Naive thymus-derived CD4-positive, alpha-beta T cell (primary cell): ENCODE measurements at regions of chr7 and their contacts with region 1.

Region 1: GRCh38 chr7:128883622-128884501 is 21.2 kb downstream of the ATP6V1F start:
- DNase-seq: peak; percentile 61 to 88 (median 81)
- ATAC-seq: peak; percentile 82
- H3K4me3 ChIP-seq: peak overlapping the region; percentile 20
- H3K4me3 Mint-ChIP-seq: no peak overlapping the region
- H3K27ac ChIP-seq: no peak overlapping the region
- H3K27ac Mint-ChIP-seq: peak overlapping the region in 1 of 9 donors; percentile 81
- H3K4me1 ChIP-seq: no peaks in the 10 kb centered on the region
- H3K4me1 Mint-ChIP-seq: peaks cover 0 to 3% (median 0%) of the 10 kb centered on the region in 7 donors
- H3K27me3 ChIP-seq: peaks cover 0 to 3% of the 10 kb centered on the region in 2 donors
- H3K27me3 Mint-ChIP-seq: peaks cover 0 to 7% (median 0%) of the 10 kb centered on the region in 5 donors

Region 2: DNA sequence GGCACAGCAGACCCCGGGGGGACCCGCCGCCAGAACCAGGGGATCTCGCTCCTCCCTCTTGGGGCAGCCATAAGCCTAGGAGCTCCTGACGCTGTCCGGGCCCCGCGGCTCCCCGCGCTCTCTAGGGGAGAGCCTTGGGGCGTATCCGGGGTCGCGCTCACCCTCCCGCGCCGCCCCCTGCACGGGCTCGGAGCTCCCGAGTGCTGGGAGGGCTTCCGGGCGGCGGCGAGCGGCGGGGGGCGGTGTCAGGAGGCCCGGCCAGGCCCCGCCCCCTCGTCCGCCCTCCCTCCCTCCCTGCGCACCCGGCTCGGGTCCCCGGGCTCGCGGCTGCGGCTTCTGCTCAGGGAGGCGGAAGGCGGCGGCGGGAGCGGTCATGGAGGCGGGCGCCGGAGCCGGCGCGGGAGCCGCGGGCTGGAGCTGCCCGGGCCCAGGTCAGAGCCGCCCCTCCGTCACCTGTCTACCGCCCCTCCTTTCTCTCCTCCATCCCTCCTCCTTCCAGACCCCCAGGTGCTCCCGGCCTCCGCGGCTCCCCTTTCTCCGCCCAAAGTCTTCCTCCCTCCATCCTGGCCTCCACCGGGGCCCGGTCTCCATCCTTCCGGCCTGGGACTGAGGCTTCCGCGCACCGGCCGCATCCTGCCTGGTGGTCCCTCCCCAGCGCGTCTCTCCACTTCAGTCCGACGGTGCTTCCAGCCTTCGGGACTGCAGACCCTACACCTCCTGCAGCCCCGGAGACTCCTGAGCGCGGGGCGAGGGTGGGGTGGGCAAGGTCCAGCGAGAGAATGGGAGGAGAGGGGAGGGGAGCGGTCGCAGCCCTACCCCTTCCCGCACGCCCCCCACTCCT is 92.5 kb before region 1 on chr7:
- CTCF ChIA-PET with region 1: interaction called, 3 read pairs
- POLR2A ChIA-PET with region 1: no interaction called
- intact Hi-C with region 1: loop called in 1 of 2 experiments (anchors 1 kb)
- DNase-seq: peak; percentile 67 to 82 (median 76)
- ATAC-seq: peak; percentile 95
- H3K4me3 ChIP-seq: peak overlapping the region; percentile 64
- H3K4me3 Mint-ChIP-seq: peak overlapping the region; percentile 62 to 90 (median 80)
- H3K27ac ChIP-seq: peak overlapping the region; percentile 68
- H3K27ac Mint-ChIP-seq: peak overlapping the region in 4 of 9 donors; percentile 19 to 80 (median 61)
- H3K4me1 ChIP-seq: peaks cover 0 to 3% of the 10 kb centered on the region in 2 donors
- H3K4me1 Mint-ChIP-seq: peaks cover 6 to 29% (median 12%) of the 10 kb centered on the region in 7 donors
- H3K27me3 ChIP-seq: no peaks in the 10 kb centered on the region
- H3K27me3 Mint-ChIP-seq: peaks cover 0 to 36% (median 0%) of the 10 kb centered on the region in 5 donors

Region 3: GRCh38 chr7:128841921-128842651 is 41.8 kb before region 1 on chr7:
- CTCF ChIA-PET with region 1: interaction called, 3 read pairs
- POLR2A ChIA-PET with region 1: no interaction called
- intact Hi-C with region 1: loop called (anchors 1 kb)
- DNase-seq: peak in 8 of 9 donors; percentile 23 to 66 (median 48)
- ATAC-seq: peak; percentile 74
- H3K4me3 ChIP-seq: no peak overlapping the region
- H3K4me3 Mint-ChIP-seq: no peak overlapping the region
- H3K27ac ChIP-seq: no peak overlapping the region
- H3K27ac Mint-ChIP-seq: peak overlapping the region in 1 of 9 donors; percentile 25
- H3K4me1 ChIP-seq: no peaks in the 10 kb centered on the region
- H3K4me1 Mint-ChIP-seq: peaks cover 0 to 2% (median 0%) of the 10 kb centered on the region in 7 donors
- H3K27me3 ChIP-seq: no peaks in the 10 kb centered on the region
- H3K27me3 Mint-ChIP-seq: no peaks in the 10 kb centered on the region

Region 4: DNA sequence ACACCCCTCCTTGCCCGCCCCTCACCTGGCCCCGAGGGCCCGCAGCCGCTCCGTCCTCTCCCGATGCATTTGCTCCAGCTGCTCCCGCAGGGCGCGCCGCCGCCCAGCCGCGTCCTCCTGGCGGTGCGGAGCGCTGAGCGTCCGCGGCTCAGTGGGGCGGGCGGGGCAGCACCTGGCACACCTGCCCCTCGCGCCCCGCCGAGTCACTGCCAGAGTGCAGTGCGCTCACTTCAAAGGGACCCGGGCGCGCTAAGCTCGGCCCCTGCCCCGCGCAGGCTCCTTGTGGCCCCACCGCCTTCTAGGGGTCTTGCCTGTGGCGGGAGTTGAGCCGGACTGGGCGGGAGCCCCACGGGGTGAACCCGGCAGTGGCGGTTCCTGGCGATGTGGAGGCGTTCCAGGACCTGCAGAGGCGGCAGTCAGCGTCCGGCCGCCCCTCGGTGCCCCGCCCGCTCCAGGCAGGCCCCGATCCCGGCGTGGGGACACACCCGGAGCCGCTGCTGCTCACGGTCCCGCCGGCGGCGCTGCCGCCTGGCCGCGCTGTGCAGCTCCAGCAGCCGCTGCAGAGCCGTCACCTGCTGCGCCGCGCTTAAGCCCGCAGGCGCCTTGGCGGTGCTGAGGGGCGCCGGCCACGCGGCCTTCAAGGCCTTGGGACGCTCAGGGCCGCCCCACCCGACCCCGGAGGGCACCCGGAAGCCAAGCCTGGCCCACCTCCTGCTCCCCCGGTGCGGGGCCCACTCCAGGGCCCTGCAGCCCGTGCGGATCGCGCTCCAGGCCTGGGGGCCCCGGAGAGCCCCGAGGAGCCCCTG is 14.5 kb before region 1 on chr7:
- CTCF ChIA-PET with region 1: interaction called, 3 read pairs
- POLR2A ChIA-PET with region 1: no interaction called
- intact Hi-C with region 1: loop called in 1 of 2 experiments (anchors 1 kb)
- DNase-seq: peak; percentile 18 to 63 (median 38)
- ATAC-seq: peak; percentile 84
- H3K4me3 ChIP-seq: peak overlapping the region; percentile 56
- H3K4me3 Mint-ChIP-seq: peak overlapping the region; percentile 47 to 81 (median 67)
- H3K27ac ChIP-seq: peak overlapping the region; percentile 18
- H3K27ac Mint-ChIP-seq: no peak overlapping the region
- H3K4me1 ChIP-seq: peaks cover under 1 to 4% of the 10 kb centered on the region in 2 donors
- H3K4me1 Mint-ChIP-seq: peaks cover 11 to 34% (median 23%) of the 10 kb centered on the region in 7 donors
- H3K27me3 ChIP-seq: no peaks in the 10 kb centered on the region
- H3K27me3 Mint-ChIP-seq: peaks cover 0 to 32% (median 0%) of the 10 kb centered on the region in 5 donors

Region 5: DNA sequence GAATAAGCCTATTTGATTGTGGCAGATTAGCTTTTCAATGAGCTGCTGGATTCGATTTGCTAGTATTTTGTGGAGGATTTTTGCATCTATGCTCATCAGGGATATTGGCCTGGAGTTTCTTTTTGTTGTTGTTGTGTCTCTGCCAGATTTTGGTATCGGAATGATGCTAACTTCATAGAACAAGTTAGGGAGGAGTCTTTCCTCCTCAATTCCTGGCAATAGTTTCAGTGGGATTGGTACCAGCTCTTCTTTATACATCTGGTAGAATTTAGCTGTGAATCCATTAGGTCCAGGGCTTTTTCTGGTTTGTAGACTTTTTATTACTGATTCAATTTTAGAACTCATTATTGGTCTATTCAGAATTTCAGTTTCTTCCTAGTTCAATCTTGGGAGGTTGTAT is 1893.6 kb after region 1 on chr7:
- CTCF ChIA-PET with region 1: no interaction called
- POLR2A ChIA-PET with region 1: no interaction called
- intact Hi-C with region 1: no loop called
- DNase-seq: no peak
- ATAC-seq: no peak
- H3K4me3 ChIP-seq: no peak overlapping the region
- H3K4me3 Mint-ChIP-seq: no peak overlapping the region
- H3K27ac ChIP-seq: no peak overlapping the region
- H3K27ac Mint-ChIP-seq: no peak overlapping the region
- H3K4me1 ChIP-seq: no peaks in the 10 kb centered on the region
- H3K4me1 Mint-ChIP-seq: no peaks in the 10 kb centered on the region
- H3K27me3 ChIP-seq: peaks cover 0 to 4% of the 10 kb centered on the region in 2 donors
- H3K27me3 Mint-ChIP-seq: peaks cover 32 to 51% (median 43%) of the 10 kb centered on the region in 5 donors